ENCODE measurements at regions of chr7 and their contacts with region 1.

Region 1: GRCh38 chr7:18357691-18358090 is 137.9 kb upstream of the HDAC9 start:
- DNase-seq: no peak
- H3K4me3 Mint-ChIP-seq: no peak overlapping the region
- H3K27ac Mint-ChIP-seq: no peak overlapping the region
- H3K4me1 Mint-ChIP-seq: peaks cover 61% of the 10 kb centered on the region
- H3K27me3 Mint-ChIP-seq: no peaks in the 10 kb centered on the region
- CTCF ChIP-seq: peak; percentile 37

Region 2: DNA sequence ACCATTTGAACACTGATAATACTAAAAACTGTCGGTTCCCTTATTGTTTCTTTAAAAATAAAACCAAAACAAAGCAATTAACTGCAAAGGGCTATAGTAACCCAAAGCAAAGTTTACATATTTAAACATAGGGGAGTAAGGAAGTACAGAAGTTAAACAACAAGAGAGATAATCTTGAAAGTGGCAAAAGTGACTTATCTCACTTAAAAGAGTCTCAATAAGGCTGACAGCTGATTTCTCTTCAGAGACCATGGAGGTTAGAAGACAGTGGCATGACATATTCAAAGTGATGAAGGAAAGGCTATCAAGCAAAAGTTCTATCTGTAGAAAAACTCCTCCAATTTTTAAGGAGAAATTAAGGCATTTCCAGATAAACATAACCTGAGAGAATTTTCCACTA is 95.6 kb before region 1 on chr7:
- CTCF ChIA-PET with region 1: no interaction called
- intact Hi-C with region 1: no loop called
- DNase-seq: no peak
- H3K4me3 Mint-ChIP-seq: no peak overlapping the region
- H3K27ac Mint-ChIP-seq: no peak overlapping the region
- H3K4me1 Mint-ChIP-seq: no peaks in the 10 kb centered on the region
- H3K27me3 Mint-ChIP-seq: no peaks in the 10 kb centered on the region
- CTCF ChIP-seq: no peak

Region 3: DNA sequence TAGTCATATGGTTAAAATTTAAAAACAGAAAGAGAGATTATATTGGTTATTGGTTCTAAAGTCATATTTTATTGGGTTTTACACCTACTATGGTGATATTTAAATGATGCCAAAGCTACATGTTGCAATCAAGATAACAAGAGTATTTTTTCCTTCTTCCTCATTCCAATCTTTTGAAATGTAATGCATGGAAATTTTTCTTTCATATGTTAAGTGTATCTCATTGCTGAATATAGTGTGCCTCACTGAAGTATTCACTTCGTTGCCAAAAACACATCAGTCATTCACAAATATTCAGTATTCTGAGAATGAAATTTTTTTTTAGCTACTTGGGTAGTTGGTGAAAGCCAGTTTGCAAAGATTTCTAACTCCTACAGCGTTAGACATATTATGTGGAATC is 157.4 kb after region 1 on chr7:
- CTCF ChIA-PET with region 1: interaction called, 18 read pairs
- intact Hi-C with region 1: no loop called
- DNase-seq: no peak
- H3K4me3 Mint-ChIP-seq: peak overlapping the region; percentile 59
- H3K27ac Mint-ChIP-seq: peak overlapping the region; percentile 98
- H3K4me1 Mint-ChIP-seq: peaks cover 57% of the 10 kb centered on the region
- H3K27me3 Mint-ChIP-seq: no peaks in the 10 kb centered on the region
- CTCF ChIP-seq: no peak

Region 4: DNA sequence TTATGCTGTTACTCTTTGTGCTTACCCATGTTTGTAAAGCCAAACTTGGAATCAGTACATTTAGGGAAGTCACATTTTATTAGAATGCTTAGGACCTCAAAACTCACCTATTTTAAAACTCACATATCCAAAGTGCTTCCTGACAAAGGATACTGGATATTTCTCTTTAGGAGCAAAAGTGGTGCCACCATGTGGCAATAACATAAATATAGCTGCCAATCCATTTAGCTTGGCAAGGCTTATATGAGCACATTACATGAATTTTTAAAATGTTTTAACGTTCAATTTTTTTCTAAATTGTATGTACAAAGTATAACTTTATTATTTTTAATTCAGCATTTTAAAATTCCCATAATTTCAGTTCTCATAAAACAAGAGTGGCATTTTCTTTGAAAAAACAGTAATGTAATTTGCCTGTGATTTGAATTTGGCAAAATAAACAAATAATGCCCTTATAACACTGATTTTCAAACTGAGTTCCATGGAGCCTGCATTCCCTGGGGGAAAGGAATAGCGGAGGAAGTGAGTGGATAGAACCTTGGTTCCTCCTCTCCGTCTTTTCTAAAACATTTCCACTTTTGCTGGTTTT is 213.3 kb after region 1 on chr7:
- CTCF ChIA-PET with region 1: interaction called, 101 read pairs
- intact Hi-C with region 1: loop called (anchors 1 kb)
- DNase-seq: peak; percentile 41
- H3K4me3 Mint-ChIP-seq: no peak overlapping the region
- H3K27ac Mint-ChIP-seq: peak overlapping the region; percentile 54
- H3K4me1 Mint-ChIP-seq: peaks cover 27% of the 10 kb centered on the region
- H3K27me3 Mint-ChIP-seq: no peaks in the 10 kb centered on the region
- CTCF ChIP-seq: peak; percentile 55

Region 5: GRCh38 chr7:18815261-18815960 is 457.7 kb after region 1 on chr7:
- CTCF ChIA-PET with region 1: no interaction called
- intact Hi-C with region 1: loop called (anchors 5 kb)
- DNase-seq: no peak
- H3K4me3 Mint-ChIP-seq: no peak overlapping the region
- H3K27ac Mint-ChIP-seq: no peak overlapping the region
- H3K4me1 Mint-ChIP-seq: no peaks in the 10 kb centered on the region
- H3K27me3 Mint-ChIP-seq: no peaks in the 10 kb centered on the region
- CTCF ChIP-seq: no peak